ENCODE measurements at regions of chr1 and their contacts with region 1.

Region 1: DNA sequence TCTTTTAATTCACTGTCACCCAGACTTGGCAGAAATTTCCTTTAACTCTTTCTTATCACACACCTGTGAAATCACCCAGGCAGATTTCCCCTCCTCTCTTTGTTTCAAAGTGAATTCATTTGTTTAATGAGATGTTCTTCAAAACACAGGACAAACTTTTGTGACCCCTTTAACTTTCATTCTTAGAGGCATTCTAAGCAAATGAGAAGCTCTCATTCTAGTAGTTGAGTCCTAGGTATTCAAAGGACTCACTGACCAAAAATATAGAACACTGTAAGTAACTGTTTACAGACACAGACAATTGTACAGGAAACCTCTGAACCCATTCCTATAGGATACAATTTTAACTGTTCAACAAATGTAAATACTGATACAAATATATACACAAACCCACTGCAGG is 16.9 kb downstream of the LRRC8C start:
- DNase-seq: no peak
- H3K4me3 Mint-ChIP-seq: no peak overlapping the region
- H3K27ac Mint-ChIP-seq: peak overlapping the region; percentile 56
- H3K4me1 Mint-ChIP-seq: peaks cover 76% of the 10 kb centered on the region
- H3K27me3 Mint-ChIP-seq: no peaks in the 10 kb centered on the region

Region 2: DNA sequence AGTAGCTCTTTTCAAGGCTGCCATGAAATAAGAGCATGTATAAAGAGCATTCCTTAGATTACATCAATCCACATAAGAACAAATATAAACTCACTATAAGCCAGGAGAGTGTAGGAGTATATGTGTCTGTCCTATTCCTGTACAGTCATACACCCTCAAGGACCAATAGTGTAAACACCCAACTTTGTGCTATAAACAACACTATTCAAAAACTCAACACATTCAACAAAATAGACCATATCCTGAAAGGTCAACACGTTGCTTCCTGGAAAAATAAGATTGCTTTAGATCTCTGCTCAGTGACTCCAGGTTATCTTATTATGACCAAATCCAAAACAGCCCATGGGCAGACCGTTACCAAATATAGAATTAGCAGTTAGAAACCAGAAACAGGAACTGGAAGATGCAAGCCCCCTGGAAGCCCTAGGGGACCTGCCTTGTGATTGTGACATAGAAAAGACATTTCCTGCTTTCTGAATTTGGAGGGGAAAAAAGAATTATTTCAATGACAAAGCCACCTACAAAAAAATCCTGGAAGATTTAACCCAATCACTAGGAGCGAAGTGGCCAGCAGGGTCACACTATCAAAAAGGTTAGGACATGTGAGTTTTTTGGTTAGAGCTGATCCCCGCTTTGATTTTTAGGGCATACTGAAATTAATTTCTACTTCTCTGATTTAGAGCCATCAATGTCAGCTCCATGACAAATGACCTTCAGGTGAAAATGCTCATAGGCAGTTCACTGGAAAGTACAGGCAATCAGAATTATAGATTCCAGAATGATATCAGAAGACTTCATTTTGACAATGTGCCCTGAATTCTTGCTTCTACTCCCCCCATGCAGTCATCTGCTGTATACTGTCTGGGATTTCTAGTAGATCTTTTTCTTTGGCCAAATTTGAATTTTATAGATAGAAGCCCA is 43.1 kb after region 1 on chr1:
- CTCF ChIA-PET with region 1: interaction called, 3 read pairs
- POLR2A ChIA-PET with region 1: no interaction called
- intact Hi-C with region 1: loop called (anchors 5 kb)
- DNase-seq: no peak
- H3K4me3 Mint-ChIP-seq: no peak overlapping the region
- H3K27ac Mint-ChIP-seq: peak overlapping the region; percentile 86
- H3K4me1 Mint-ChIP-seq: peaks cover 93% of the 10 kb centered on the region
- H3K27me3 Mint-ChIP-seq: no peaks in the 10 kb centered on the region

Region 3: GRCh38 chr1:89843281-89844121 is 193.7 kb after region 1 on chr1:
- CTCF ChIA-PET with region 1: no interaction called
- POLR2A ChIA-PET with region 1: no interaction called
- intact Hi-C with region 1: no loop called
- DNase-seq: peak; percentile 89
- H3K4me3 Mint-ChIP-seq: peak overlapping the region; percentile 93
- H3K27ac Mint-ChIP-seq: peak overlapping the region; percentile 92
- H3K4me1 Mint-ChIP-seq: peaks cover 51% of the 10 kb centered on the region
- H3K27me3 Mint-ChIP-seq: no peaks in the 10 kb centered on the region

Region 4: DNA sequence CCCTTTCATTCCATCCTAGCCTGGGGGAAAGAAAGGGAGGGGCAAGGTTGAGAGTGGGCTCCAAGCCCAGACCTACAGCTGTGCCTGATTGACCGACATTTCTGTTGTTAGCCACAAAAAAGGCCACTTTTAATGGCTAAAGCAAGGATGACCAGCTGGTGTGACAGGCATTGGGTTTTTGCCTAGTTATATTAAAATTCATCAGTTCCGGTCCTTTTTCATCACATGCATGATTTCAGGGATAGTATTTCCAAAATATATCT is 537.5 kb after region 1 on chr1:
- CTCF ChIA-PET with region 1: no interaction called
- POLR2A ChIA-PET with region 1: no interaction called
- intact Hi-C with region 1: no loop called
- DNase-seq: no peak
- H3K4me3 Mint-ChIP-seq: no peak overlapping the region
- H3K27ac Mint-ChIP-seq: no peak overlapping the region
- H3K4me1 Mint-ChIP-seq: no peaks in the 10 kb centered on the region
- H3K27me3 Mint-ChIP-seq: peaks cover 11% of the 10 kb centered on the region

Region 5: GRCh38 chr1:91511386-91511785 is 1861.6 kb after region 1 on chr1:
- CTCF ChIA-PET with region 1: no interaction called
- POLR2A ChIA-PET with region 1: no interaction called
- intact Hi-C with region 1: no loop called
- DNase-seq: no peak
- H3K4me3 Mint-ChIP-seq: no peak overlapping the region
- H3K27ac Mint-ChIP-seq: no peak overlapping the region
- H3K4me1 Mint-ChIP-seq: peaks cover 3% of the 10 kb centered on the region
- H3K27me3 Mint-ChIP-seq: no peaks in the 10 kb centered on the region